ENCODE measurements at regions of chr6 and their contacts with region 1.

Region 1: DNA sequence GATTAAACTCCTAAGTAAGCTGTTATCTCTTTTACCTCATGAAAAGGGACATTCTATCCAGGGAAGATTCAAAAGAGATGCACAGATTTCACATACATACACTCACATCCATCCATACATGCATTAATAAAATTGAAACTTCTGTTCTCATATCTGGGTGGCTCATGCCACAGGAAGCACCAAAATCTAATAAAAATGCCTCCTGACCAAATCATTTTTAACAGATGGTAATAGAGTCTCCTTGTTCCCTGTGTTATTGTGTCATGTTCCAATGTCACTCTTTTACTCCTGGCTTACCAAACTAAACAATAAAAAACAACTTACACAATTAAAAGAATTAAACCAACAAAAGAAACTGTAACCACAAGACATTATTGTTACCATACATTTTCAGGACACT is 742.1 kb upstream of the MANEA start:
- DNase-seq: no peak
- H3K4me3 ChIP-seq: no peak overlapping the region
- H3K27ac ChIP-seq: no peak overlapping the region
- H3K4me1 ChIP-seq: no peaks in the 10 kb centered on the region
- H3K27me3 ChIP-seq: no peaks in the 10 kb centered on the region
- CTCF ChIP-seq: no peak

Region 2: DNA sequence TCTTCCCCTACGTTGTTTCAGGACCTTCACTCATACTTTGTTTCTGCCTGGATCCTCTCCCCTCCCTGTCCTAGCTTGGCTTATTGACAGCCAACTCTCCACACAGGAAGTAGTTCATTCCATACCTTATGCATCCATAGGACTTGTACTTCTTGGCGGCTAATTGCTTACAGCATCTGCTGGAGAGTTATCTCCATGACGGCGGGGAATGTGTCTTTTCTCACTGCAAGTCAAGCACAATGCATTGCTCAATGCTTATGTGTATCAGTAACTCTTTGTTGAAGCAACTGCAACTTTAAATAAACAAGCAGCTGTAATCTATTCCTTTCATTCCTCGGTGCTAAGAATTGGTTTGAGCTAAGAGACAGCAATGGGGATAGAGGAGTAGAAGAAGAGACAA is 864.6 kb before region 1 on chr6:
- CTCF ChIA-PET with region 1: no interaction called
- dilution Hi-C with region 1: no loop called
- in situ Hi-C with region 1: no loop called
- intact Hi-C with region 1: no loop called
- DNase-seq: no peak
- H3K4me3 ChIP-seq: no peak overlapping the region
- H3K27ac ChIP-seq: no peak overlapping the region
- H3K4me1 ChIP-seq: no peaks in the 10 kb centered on the region
- H3K27me3 ChIP-seq: no peaks in the 10 kb centered on the region
- CTCF ChIP-seq: no peak

Region 3: DNA sequence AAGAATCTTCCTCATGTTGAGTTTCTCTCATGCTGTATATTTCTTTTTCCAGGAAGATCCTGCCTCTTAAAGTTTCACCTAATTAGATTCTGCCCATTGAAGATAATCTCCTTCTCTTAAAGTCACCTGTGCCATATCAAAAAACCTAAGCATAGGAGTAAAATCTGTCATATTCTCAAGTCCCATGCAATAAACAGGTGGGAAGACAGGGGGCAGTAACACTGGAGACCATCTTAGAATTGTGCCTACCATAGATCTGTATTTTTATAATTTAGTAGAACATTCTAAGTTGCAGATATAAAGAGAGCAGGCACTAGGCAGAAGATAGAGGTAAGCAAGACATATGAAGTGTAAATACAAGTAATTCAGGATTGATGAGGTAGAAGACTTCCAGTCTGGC is 21.5 kb before region 1 on chr6:
- CTCF ChIA-PET with region 1: no interaction called
- dilution Hi-C with region 1: no loop called
- in situ Hi-C with region 1: no loop called
- intact Hi-C with region 1: loop called (anchors 1 kb)
- DNase-seq: no peak
- H3K4me3 ChIP-seq: no peak overlapping the region
- H3K27ac ChIP-seq: no peak overlapping the region
- H3K4me1 ChIP-seq: no peaks in the 10 kb centered on the region
- H3K27me3 ChIP-seq: no peaks in the 10 kb centered on the region
- CTCF ChIP-seq: peak in 1 of 2 donors; percentile 9

Measured in mammary epithelial cell (primary cell).